ENCODE measurements at regions of chr18 and their contacts with region 1.

Region 1: DNA sequence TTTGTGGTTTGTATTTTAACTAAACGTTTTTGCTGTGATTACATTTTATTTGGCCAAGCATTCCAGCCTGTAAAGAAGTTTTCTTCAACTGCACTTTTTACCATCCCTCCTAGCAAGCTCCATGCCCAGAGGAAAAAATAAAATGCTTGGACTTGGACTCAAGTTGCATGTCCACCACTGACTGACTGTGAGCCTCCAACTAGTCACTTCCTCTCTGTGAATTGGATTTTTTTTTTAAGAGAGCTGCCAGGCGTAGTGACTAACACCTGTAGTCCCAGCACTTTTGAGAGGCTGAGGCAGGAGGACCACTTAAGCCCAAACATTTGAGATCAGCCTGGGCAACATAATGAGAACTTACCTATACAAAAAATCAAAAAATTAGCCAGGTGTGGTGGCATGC is 1185.2 kb upstream of the PIK3C3 start:
- DNase-seq: no peak
- ATAC-seq: no peak
- H3K4me3 ChIP-seq: no peak overlapping the region
- H3K27ac ChIP-seq: no peak overlapping the region
- H3K4me1 ChIP-seq: no peaks in the 10 kb centered on the region
- H3K27me3 ChIP-seq: no peaks in the 10 kb centered on the region
- CTCF ChIP-seq: no peak
- POLR2A ChIP-seq: no peak

Region 2: DNA sequence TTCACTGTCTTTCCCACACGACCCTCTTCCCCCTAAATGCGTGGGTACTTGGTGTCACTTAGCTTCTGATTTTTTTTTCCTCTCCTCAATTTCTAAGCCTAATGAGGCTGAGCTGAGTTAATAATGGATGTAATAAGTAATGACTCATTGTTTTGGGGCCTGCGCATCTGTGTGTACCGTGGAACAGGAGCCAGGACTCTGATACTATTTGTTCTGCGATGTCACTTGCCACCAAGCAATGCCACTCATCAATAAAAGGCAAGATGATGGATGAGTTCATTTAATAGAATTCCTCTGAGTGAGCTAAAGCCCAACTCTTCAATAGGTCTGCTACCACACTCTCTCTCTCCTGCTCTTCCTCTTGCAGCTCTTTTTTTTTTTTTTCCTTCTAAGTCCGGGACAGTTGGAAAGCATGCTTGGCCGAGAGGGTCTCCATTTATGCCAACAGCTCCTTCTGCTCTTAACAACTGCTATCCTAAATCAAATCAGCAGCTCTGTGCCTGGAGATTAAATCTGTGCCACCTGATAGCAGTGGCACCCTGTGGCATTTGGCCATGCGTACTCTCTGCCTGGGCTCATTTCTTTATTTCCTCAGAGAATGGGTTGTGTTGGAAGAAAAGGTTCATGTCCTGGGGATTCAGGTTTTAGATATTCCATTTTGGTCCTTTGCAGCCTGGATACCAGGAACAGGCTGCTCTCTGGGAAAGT is 99.0 kb before region 1 on chr18:
- intact Hi-C with region 1: loop called in 1 of 10 experiments (anchors 10 kb)
- DNase-seq: no peak
- ATAC-seq: no peak
- H3K4me3 ChIP-seq: no peak overlapping the region
- H3K27ac ChIP-seq: no peak overlapping the region
- H3K4me1 ChIP-seq: no peaks in the 10 kb centered on the region
- H3K27me3 ChIP-seq: no peaks in the 10 kb centered on the region
- CTCF ChIP-seq: no peak
- POLR2A ChIP-seq: no peak

Measured in heart left ventricle (tissue), 16 donors.